ENCODE measurements at regions of chr11 and their contacts with region 1.

Region 1: DNA sequence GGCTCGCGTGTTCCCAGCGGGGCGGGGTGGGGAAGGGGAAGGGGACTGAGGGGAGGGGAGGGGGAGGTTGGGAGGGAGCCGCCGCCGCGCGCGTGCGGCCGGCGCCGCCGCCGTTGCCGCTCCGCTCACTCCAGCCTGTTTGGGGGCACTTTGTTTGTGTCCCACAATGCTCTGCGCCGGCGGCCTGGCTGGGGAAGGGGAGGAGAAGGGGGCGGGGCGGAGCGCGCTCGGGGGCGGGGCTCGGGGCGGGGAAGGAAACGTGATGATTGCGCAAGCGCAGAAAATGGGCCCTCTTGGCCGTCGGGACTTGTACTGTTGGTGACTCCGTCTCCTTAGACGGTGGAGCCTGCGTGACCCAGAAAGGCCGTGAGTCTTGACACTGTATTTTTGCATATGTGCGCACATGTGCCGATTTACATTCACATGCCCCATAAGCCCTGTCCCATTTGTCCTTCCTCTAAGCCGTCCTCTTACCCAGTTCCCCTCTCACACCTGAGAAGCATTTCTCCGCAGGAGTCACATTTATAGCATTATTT is at the start of gene ZBTB44:
- DNase-seq: peak; percentile 75 to 96
- H3K4me3 ChIP-seq: peak within 1 kb of the TSS; percentile 89 to 98
- H3K27ac ChIP-seq: peak within 1 kb of the TSS; percentile 90 to 95
- H3K4me1 ChIP-seq: peaks cover 0 to 25% of the 10 kb centered on the region in 2 donors
- H3K27me3 ChIP-seq: no peaks in the 10 kb centered on the region
- CTCF ChIP-seq: no peak
- total RNA-seq, gene ZBTB44: 24.4 TPM

Region 2: GRCh38 chr11:129895126-129896041 is 419.4 kb before region 1 on chr11 and contains the start of gene NFRKB:
- intact Hi-C with region 1: loop called (anchors 10 kb)
- DNase-seq: peak in 1 of 2 donors; percentile 93
- H3K4me3 ChIP-seq: peak within 1 kb of the TSS; percentile 94 to 96
- H3K27ac ChIP-seq: peak within 1 kb of the TSS; percentile 60 to 78
- H3K4me1 ChIP-seq: peaks cover 0 to 9% of the 10 kb centered on the region in 2 donors
- H3K27me3 ChIP-seq: no peaks in the 10 kb centered on the region
- CTCF ChIP-seq: no peak
- total RNA-seq, gene NFRKB: 6.9 TPM

Region 3: DNA sequence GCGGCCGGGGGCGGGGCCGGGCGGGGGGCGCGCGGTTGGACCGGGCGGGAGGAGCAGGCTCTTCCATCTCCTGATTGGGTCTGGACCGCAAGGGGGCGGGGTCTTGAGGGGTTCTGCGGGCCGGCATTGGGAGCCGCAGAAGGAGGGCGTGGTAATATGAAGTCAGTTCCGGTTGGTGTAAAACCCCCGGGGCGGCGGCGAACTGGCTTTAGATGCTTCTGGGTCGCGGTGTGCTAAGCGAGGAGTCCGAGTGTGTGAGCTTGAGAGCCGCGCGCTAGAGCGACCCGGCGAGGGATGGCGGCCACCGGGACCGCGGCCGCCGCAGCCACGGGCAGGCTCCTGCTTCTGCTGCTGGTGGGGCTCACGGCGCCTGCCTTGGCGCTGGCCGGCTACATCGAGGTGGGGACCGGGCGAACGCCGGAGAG is 245.1 kb before region 1 on chr11 and contains the start of gene APLP2:
- intact Hi-C with region 1: loop called (anchors 2 kb)
- DNase-seq: peak; percentile 99 to 100
- H3K4me3 ChIP-seq: peak within 1 kb of the TSS; percentile 87 to 96
- H3K27ac ChIP-seq: peak within 1 kb of the TSS; percentile 92 to 98
- H3K4me1 ChIP-seq: peaks cover 11 to 12% of the 10 kb centered on the region in 2 donors
- H3K27me3 ChIP-seq: no peaks in the 10 kb centered on the region
- CTCF ChIP-seq: peak in 1 of 3 experiments; percentile 3
- total RNA-seq, gene APLP2: 216 TPM

Region 4: GRCh38 chr11:130370845-130371590 is 56.2 kb after region 1 on chr11:
- intact Hi-C with region 1: no loop called
- DNase-seq: no peak
- H3K4me3 ChIP-seq: no peak overlapping the region
- H3K27ac ChIP-seq: no peak overlapping the region
- H3K4me1 ChIP-seq: no peaks in the 10 kb centered on the region
- H3K27me3 ChIP-seq: no peaks in the 10 kb centered on the region
- CTCF ChIP-seq: no peak

Region 5: GRCh38 chr11:130427581-130428315 is 112.9 kb after region 1 on chr11:
- intact Hi-C with region 1: loop called (anchors 5 kb)
- DNase-seq: no peak
- H3K4me3 ChIP-seq: peak overlapping the region; percentile 51 to 83
- H3K27ac ChIP-seq: peak overlapping the region in 1 of 2 donors; percentile 64
- H3K4me1 ChIP-seq: peaks cover 3 to 17% of the 10 kb centered on the region in 2 donors
- H3K27me3 ChIP-seq: no peaks in the 10 kb centered on the region
- CTCF ChIP-seq: peak in 1 of 3 experiments; percentile 45

Region 6: GRCh38 chr11:130548491-130548833 is 233.6 kb after region 1 on chr11:
- intact Hi-C with region 1: no loop called
- DNase-seq: no peak
- H3K4me3 ChIP-seq: no peak overlapping the region
- H3K27ac ChIP-seq: no peak overlapping the region
- H3K4me1 ChIP-seq: no peaks in the 10 kb centered on the region
- H3K27me3 ChIP-seq: no peaks in the 10 kb centered on the region
- CTCF ChIP-seq: no peak

Region 7: GRCh38 chr11:130894322-130895025 is 579.7 kb after region 1 on chr11:
- intact Hi-C with region 1: loop called (anchors 5 kb)
- DNase-seq: peak in 1 of 2 donors; percentile 88
- H3K4me3 ChIP-seq: no peak overlapping the region
- H3K27ac ChIP-seq: peak overlapping the region; percentile 86 to 93
- H3K4me1 ChIP-seq: peaks cover 27 to 60% of the 10 kb centered on the region in 2 donors
- H3K27me3 ChIP-seq: no peaks in the 10 kb centered on the region
- CTCF ChIP-seq: peak; percentile 80 to 86 (median 81)